Panc1 (cell line): ENCODE measurements at regions of chr12 and their contacts with region 1.

Region 1: DNA sequence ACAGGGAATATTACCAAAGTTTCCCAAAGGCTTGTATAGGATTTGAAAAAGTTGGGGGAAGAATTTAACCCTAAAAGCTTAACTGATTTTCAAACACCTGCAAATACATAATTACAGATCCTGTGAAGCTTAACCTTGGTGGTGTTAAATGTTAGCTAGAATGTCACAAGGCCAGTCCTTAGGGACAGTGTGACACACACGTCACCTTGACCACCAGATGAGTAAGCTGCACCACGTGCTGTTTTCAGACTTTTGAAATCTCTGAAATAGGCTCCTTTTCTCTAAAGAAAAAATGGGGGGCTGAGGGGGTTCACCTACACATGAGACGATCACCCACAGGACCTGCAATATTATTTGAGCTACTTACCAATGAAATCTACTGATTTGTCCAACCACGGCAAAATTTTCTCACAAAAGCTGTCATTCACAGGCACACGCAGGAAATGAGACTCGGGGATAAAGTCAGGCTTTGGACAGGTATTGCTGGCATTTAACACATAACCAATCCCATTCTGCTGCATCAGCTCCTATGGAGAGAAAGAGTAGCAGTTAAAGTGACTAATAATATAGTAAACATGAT is 75.9 kb downstream of the DUSP16 start:
- DNase-seq: no peak
- ATAC-seq: no peak
- H3K4me3 ChIP-seq: no peak overlapping the region
- H3K27ac ChIP-seq: no peak overlapping the region
- H3K4me1 ChIP-seq: no peaks in the 10 kb centered on the region
- H3K27me3 ChIP-seq: no peaks in the 10 kb centered on the region
- CTCF ChIP-seq: no peak

Region 2: DNA sequence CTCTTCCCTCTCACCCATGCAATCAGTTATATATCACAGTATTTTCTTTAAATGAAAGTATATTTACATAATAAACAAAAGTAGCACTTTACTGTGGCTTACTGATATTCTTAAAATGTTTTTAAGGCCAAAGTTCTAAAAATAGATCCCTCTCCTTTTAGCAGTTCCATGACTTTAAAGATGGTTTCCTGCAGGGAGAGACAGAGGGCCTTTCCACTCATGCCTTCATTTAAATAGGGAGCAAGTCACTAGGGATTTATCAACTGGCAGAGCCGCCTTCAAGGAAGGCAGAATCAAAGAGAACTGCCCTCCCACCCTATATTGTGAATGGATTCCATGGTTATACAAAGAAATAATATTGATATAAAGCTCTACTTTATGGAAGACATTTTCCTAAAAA is 20.4 kb after region 1 on chr12:
- CTCF ChIA-PET with region 1: no interaction called
- POLR2A ChIA-PET with region 1: no interaction called
- in situ Hi-C with region 1: no loop called
- intact Hi-C with region 1: loop called (anchors 1 kb)
- DNase-seq: no peak
- ATAC-seq: no peak
- H3K4me3 ChIP-seq: no peak overlapping the region
- H3K27ac ChIP-seq: no peak overlapping the region
- H3K4me1 ChIP-seq: no peaks in the 10 kb centered on the region
- H3K27me3 ChIP-seq: no peaks in the 10 kb centered on the region
- CTCF ChIP-seq: no peak